PC-9 (cell line): ENCODE measurements at regions of chrX and their contacts with region 1.

Region 1: DNA sequence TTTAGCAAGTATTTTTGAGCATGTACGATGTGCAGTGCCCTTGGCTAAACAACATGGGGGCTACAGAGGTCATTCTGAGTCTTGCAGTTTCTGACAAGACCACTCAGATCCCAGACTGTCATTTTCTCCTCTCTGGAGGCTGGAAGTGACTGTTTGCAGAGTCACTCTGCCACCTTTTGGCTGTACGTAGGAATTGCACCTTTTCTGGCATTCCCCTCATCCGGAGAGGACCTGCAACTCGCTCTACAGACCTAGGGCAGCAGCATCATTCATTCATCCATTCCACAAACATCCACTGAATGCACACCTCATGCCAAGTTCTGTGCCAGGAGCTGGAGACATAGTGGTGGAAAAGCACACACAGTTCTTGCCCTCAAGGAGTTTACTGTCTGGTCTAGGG is 160.4 kb upstream of the GPR101 start:
- DNase-seq: peak in 1 of 2 experiments; percentile 17
- H3K4me3 ChIP-seq: no peak overlapping the region
- H3K27ac ChIP-seq: no peak overlapping the region
- H3K4me1 ChIP-seq: no peaks in the 10 kb centered on the region
- H3K27me3 ChIP-seq: 0 out of 2 replicates have a peak, but pooled peaks cover under 1% of the 10 kb centered on the region
- CTCF ChIP-seq: peak; percentile 69

Region 2: DNA sequence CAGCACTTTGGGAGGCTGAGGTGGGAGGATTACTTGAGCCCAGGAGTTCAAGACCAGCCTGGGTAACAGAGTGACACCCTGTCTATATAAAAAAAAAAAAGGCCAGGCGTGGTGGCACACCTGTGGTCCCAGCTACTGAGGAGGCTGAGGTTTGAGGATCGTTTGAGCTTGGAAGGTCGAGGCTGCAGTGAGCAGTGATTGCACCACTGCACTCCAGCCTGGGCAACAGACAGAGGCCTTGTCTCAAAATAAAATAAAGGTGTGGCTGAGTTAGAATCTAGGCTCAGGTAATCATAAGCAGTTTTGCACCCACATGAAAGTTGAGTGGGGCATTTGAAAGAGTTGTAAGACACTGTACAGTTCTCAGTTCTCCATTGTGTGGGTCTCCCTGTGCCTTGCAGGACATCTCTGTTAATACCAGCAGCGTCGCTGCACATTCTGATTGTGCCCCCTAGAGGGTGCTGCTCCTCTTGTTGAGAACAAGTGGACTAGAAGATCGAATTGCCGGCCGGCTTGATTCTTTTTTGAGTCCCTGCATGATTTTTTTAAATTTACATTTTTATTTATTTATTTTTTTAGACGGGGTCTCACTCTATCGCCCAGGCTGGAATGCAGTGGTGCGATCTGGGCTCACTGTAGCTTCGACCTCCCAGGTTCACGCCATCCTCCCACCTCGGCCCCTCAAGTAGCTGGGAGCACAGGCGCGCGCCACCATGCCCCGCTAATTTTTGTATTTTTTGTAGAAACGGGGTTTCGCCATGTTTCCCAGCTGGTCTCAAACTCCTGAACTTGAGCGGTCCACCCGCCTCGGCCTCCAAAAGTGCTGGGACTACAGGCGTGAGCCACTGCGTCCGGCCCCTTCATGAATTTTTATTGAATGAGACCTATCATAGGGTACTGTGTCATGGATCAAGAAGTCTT is 240.0 kb before region 1 on chrX:
- CTCF ChIA-PET with region 1: no interaction called
- POLR2A ChIA-PET with region 1: no interaction called
- intact Hi-C with region 1: loop called (anchors 5 kb)
- DNase-seq: peak; percentile 36 to 59
- H3K4me3 ChIP-seq: no peak overlapping the region
- H3K27ac ChIP-seq: no peak overlapping the region
- H3K4me1 ChIP-seq: no peaks in the 10 kb centered on the region
- H3K27me3 ChIP-seq: no peaks in the 10 kb centered on the region
- CTCF ChIP-seq: peak; percentile 65

Region 3: GRCh38 chrX:136999024-136999423 is 195.1 kb before region 1 on chrX:
- CTCF ChIA-PET with region 1: no interaction called
- POLR2A ChIA-PET with region 1: no interaction called
- intact Hi-C with region 1: no loop called
- DNase-seq: no peak
- H3K4me3 ChIP-seq: no peak overlapping the region
- H3K27ac ChIP-seq: no peak overlapping the region
- H3K4me1 ChIP-seq: no peaks in the 10 kb centered on the region
- H3K27me3 ChIP-seq: no peaks in the 10 kb centered on the region
- CTCF ChIP-seq: no peak

Region 4: DNA sequence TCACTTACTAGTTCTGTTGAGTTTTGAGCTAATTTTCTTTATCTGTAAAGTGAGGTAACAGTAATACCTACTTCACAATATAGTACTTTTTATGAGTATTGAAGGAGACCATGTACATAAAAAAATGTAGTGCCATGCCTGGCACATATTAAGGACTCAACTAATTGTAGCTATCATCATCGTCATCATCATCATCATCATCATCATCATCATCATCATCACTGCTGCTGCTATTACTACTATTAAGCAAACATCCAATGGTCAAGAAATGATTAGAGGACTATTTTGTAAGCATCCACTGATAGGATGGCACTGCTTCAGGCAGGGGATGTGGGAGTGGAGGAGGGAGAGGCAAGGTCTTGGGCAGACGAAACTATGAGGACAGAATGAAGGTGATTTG is 112.9 kb before region 1 on chrX:
- CTCF ChIA-PET with region 1: no interaction called
- POLR2A ChIA-PET with region 1: interaction called, 30 read pairs
- intact Hi-C with region 1: no loop called
- DNase-seq: no peak
- H3K4me3 ChIP-seq: no peak overlapping the region
- H3K27ac ChIP-seq: no peak overlapping the region
- H3K4me1 ChIP-seq: no peaks in the 10 kb centered on the region
- H3K27me3 ChIP-seq: 0 out of 2 replicates have a peak, but pooled peaks cover 3% of the 10 kb centered on the region
- CTCF ChIP-seq: no peak

Region 5: DNA sequence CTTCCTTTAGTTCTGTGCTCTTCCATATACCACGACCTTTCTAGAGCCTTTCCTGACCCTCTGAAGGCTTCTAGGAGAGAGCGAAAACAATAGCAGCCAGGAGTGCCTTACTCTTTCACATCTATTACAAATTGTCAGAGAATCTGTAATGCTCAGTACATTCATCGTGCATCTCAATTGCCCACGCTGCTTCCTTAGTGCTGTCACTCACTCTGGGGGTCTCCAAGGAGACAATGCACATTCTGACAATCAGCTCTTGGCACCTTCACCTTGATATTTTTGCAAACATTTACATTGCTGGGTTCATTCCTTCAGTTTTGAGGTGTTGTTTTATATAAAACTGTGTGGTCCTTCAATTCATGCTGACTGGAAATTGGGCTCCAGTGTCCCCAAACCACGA is 50.3 kb before region 1 on chrX:
- CTCF ChIA-PET with region 1: no interaction called
- POLR2A ChIA-PET with region 1: no interaction called
- intact Hi-C with region 1: no loop called
- DNase-seq: no peak
- H3K4me3 ChIP-seq: no peak overlapping the region
- H3K27ac ChIP-seq: no peak overlapping the region
- H3K4me1 ChIP-seq: no peaks in the 10 kb centered on the region
- H3K27me3 ChIP-seq: peaks cover 9% of the 10 kb centered on the region; the same call in 1 of the 2 replicates
- CTCF ChIP-seq: no peak